ENCODE measurements at regions of chr11 and their contacts with region 1.

Region 1: DNA sequence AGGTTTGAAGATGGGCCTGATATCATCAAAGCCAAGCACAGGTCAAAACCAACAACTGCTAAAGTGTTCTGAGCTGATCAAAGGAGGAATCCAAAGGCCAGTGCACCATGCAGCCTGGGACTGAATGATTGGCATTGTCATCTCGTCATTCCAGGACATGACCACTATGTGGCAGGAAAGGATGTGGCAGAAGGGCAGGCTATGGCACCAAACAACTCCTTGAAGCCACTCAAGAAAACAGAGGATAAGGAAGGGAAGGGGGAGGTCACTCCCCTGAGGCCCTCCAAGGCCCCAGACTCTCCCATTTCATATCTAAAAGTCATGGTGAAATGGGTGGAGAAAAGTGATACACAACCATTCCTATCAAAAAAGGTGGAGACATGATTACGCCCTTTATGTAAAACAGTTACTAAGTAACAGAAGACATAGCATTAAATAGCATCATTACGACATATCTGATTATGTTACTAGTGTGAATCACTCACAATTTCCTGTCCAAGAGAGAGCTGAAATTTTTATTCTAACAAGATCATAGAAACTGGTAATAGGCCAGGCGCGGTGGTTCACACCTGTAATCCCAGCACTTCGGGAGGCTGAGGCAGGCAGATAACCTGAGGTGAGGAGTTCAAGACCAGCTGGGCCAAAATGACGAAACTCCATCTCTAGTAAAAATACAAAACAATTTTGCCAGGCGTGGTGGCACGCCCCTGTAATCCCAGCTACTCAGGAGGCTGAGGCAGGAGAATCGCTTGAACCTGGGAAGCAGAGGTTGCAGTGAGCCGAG is 49.3 kb downstream of the AHNAK start:
- DNase-seq: peak; percentile 74
- ATAC-seq: peak; percentile 77
- H3K4me3 ChIP-seq: no peak overlapping the region
- H3K27ac ChIP-seq: peak overlapping the region; percentile 16; the same call in 1 of the 2 replicates
- H3K4me1 ChIP-seq: peaks cover 31 to 43% of the 10 kb centered on the region in 2 experiments
- H3K27me3 ChIP-seq: no peaks in the 10 kb centered on the region
- CTCF ChIP-seq: peak; percentile 60 to 78 (median 69)
- POLR2A ChIP-seq: no peak
- RAD21 ChIP-seq: peak; percentile 94

Region 2: GRCh38 chr11:62421996-62422395 is 75.3 kb before region 1 on chr11:
- CTCF ChIA-PET with region 1: interaction called, 19 read pairs
- POLR2A ChIA-PET with region 1: interaction called, 6 read pairs
- RAD21 ChIA-PET with region 1: interaction called, 3 to 9 read pairs
- intact Hi-C with region 1: no loop called
- DNase-seq: no peak
- ATAC-seq: no peak
- H3K4me3 ChIP-seq: no peak overlapping the region
- H3K27ac ChIP-seq: no peak overlapping the region
- H3K4me1 ChIP-seq: peaks cover 0 to 20% of the 10 kb centered on the region in 2 experiments; a peak in 2 of 4 replicates
- H3K27me3 ChIP-seq: no peaks in the 10 kb centered on the region
- CTCF ChIP-seq: no peak
- POLR2A ChIP-seq: no peak
- RAD21 ChIP-seq: no peak

Region 3: DNA sequence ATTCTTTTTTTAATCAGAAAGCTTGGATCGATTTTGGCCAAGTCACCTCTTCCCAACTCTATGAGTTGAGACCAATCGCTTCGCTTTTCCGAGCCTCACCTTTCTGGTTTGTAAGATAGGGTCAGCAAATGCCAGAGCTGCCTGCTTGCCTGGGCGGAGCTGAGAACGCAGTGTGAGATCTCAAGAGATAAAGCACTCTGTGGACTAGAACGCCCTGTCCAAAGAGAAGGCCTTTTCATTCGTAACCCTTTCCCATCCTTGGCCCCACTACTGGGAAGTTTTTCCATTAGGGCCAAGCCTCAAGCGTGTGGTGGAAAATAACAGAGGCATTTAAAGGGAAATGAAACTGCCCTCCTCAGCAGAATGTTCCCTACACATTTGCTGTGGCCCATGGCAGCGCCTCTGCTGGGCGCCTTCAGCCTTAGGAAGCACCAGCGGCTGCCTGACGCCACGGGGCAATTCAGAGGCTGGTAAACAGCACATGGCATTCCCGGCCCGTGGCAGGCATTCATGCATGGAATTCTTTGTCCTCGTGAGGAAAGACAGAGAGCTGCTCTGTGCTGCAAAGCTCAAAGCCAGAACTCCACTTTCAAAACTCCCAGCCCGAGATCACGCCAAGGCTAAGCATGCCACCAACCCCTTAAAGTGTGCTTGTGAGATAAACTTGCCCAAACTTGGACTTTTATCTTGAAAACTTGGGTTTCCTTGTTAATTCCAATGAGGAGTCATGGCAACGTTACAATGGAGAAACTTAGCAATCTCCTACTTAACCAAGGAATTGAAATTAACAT is 11.1 kb after region 1 on chr11:
- CTCF ChIA-PET with region 1: interaction called, 10 read pairs
- POLR2A ChIA-PET with region 1: interaction called, 4 read pairs
- RAD21 ChIA-PET with region 1: no interaction called
- intact Hi-C with region 1: no loop called
- DNase-seq: peak; percentile 39
- ATAC-seq: peak; percentile 95
- H3K4me3 ChIP-seq: peak overlapping the region; percentile 28 to 43
- H3K27ac ChIP-seq: peak overlapping the region; percentile 37
- H3K4me1 ChIP-seq: peaks cover 11 to 28% of the 10 kb centered on the region in 2 experiments
- H3K27me3 ChIP-seq: no peaks in the 10 kb centered on the region
- CTCF ChIP-seq: peak in 2 of 3 experiments; percentile 60 to 77; a peak in 5 of 6 replicates
- POLR2A ChIP-seq: no peak
- RAD21 ChIP-seq: no peak

Region 4: GRCh38 chr11:62922658-62923431 is 425.5 kb after region 1 on chr11:
- CTCF ChIA-PET with region 1: no interaction called
- POLR2A ChIA-PET with region 1: no interaction called
- RAD21 ChIA-PET with region 1: no interaction called
- intact Hi-C with region 1: no loop called
- DNase-seq: no peak
- ATAC-seq: 0 out of 2 replicates have a peak, but pooled peaks have one; percentile 9
- H3K4me3 ChIP-seq: no peak overlapping the region
- H3K27ac ChIP-seq: no peak overlapping the region
- H3K4me1 ChIP-seq: peaks cover 7 to 17% of the 10 kb centered on the region in 2 experiments
- H3K27me3 ChIP-seq: no peaks in the 10 kb centered on the region; the same call in 1 of the 2 replicates
- CTCF ChIP-seq: peak in 2 of 3 experiments; percentile 46 to 60; a peak in 4 of 6 replicates
- POLR2A ChIP-seq: no peak
- RAD21 ChIP-seq: no peak